ENCODE measurements at regions of chr1 and their contacts with region 1.

Region 1: GRCh38 chr1:216750012-216750627 is 26.9 kb upstream of the ESRRG start:
- DNase-seq: no peak
- ATAC-seq: peak; percentile 69

Region 2: DNA sequence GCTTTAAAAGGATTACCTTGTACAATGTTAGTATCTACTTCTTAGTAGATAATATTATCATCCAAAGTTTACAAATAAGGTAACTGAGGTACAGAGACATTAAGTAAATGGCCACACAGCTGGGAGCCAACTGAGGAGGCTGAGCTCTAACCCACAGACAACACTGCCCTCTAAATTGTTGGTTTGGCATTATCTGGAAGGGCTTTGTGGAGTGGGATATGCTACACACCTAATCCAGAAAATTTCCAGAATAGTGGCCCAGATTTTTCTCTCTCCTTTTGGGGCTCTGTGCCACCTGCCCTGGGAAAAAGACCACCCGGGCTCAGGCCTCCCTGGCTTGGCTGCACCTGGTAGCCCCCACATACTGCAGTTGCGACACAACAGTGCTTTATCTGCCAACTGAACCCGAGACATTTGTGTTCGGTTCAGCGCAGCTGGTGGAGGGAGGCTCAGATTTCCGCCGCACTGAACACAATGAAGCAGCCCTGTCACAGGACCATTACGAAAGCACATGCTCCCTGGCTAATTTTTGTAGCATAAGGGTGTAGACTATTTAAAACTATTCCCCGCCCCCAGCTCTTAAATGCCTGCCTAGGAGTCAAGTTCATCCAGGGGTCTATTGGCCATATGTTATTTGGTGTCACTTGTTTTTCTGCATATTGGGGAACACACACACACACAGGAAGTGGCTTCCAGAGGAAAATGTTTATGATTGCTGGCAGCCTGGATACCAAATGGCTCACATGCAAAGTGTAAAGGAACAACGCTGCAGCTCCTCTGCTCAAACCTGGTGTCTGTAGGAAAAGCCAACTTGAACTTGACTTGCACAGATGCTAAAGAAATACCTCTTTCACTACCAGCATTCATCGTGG is 65.4 kb after region 1 on chr1:
- intact Hi-C with region 1: loop called (anchors 2 kb)
- DNase-seq: peak; percentile 50
- ATAC-seq: peak; percentile 85

Region 3: GRCh38 chr1:217078078-217078690 is 328.1 kb after region 1 on chr1:
- intact Hi-C with region 1: loop called (anchors 5 kb)
- DNase-seq: no peak
- ATAC-seq: peak; percentile 78

Region 4: DNA sequence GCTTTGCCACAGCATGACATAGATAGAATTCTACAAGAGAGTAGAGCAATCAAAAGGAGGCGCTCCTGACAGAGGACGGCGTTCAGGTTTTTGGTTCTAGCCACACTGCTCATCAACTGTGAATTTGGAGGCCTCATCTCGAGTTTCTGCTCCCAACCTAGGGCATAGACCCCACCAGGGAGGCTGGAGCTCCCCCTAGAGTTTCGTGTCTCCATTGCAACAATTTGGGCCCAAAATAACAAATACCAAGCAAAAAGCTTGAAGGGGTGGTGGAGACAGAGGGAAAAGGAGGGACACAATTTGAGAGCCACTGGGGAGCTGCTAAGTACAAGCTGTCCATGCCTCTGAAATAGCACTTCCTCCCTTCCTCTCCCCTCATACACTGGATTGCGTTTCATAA is 583.8 kb after region 1 on chr1:
- intact Hi-C with region 1: loop called (anchors 10 kb)
- DNase-seq: no peak
- ATAC-seq: no peak